ENCODE measurements at regions of chr2 and their contacts with region 1.

Region 1: GRCh38 chr2:236180831-236181453 is 12.8 kb upstream of the GBX2 start:
- DNase-seq: peak; percentile 49
- ATAC-seq: no peak
- H3K4me3 Mint-ChIP-seq: no peak overlapping the region
- H3K27ac Mint-ChIP-seq: no peak overlapping the region
- H3K4me1 Mint-ChIP-seq: no peaks in the 10 kb centered on the region
- H3K27me3 Mint-ChIP-seq: peaks cover 46% of the 10 kb centered on the region

Region 2: GRCh38 chr2:235779444-235779896 is 401.5 kb before region 1 on chr2:
- CTCF ChIA-PET with region 1: interaction called, 41 read pairs
- DNase-seq: peak; percentile 71
- ATAC-seq: peak; percentile 68
- H3K4me3 Mint-ChIP-seq: no peak overlapping the region
- H3K27ac Mint-ChIP-seq: no peak overlapping the region
- H3K4me1 Mint-ChIP-seq: no peaks in the 10 kb centered on the region
- H3K27me3 Mint-ChIP-seq: peaks cover 16% of the 10 kb centered on the region

Region 3: DNA sequence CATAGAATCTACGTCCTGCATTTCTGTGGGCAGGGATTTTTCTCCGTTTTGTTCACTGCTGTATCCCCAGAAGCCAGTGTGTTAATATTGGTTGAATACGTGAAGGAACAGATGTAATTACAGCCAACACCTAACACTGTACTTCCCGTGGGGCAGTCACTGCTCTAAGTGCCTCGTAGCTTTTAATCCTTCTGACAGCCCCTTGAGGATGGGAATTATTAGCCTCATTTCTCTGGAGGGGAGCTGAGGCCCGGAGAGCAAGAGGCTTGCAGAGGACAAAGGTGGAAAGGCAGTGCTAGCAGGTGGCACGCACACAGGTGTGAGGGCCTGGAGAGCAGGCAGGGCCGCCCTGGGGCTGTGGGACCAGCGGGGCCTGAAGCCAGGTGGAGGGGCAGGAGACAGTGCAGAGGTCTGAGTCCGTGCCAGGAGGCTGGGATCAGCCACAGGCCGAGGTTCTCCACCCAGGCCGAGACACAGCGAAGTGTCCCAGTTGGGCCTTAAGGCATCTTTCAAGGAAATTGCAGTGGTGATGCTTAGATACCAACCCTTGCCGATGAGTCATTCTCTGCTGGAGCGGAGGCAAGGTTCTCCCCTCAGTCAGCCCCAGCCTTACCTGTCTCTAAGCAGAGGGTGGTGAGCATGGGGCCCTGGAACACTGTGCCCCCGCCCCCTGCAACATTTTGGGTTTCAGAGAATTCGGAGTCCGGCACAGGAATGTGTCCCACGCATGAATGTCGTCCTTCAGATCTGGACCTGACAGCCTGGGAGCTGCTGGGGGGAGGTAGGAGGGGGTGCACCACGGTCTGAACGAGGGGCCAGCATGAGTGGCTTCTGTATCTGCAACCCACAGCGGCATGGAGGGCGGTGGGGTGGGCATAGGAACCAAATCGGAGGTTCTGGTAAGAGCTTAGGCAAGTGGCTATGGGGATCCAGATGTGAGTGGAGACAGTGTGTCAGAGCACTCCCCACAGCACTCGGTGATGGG is 135.4 kb before region 1 on chr2:
- CTCF ChIA-PET with region 1: no interaction called
- DNase-seq: no peak
- ATAC-seq: no peak
- H3K4me3 Mint-ChIP-seq: no peak overlapping the region
- H3K27ac Mint-ChIP-seq: no peak overlapping the region
- H3K4me1 Mint-ChIP-seq: peaks cover 8% of the 10 kb centered on the region
- H3K27me3 Mint-ChIP-seq: peaks cover 5% of the 10 kb centered on the region

Region 4: DNA sequence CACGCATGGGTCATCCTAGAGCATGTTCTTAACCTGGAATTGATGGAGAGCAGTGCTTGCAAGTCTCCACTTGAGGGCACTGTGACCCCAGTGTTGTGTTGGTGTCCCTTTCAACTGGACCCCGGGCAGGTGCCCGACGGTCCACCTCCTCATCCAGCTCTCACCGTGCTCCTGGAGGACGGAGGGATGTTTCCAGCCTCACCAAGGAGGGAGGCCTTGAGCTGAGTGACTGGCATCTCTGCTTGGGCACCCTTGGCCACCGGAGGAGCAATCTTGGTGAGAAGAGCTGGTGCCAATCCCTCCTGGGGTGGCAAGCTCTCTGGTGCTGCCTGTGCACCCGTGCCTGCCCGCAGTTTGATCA is 128.7 kb after region 1 on chr2:
- CTCF ChIA-PET with region 1: no interaction called
- DNase-seq: no peak
- ATAC-seq: no peak
- H3K4me3 Mint-ChIP-seq: no peak overlapping the region
- H3K27ac Mint-ChIP-seq: no peak overlapping the region
- H3K4me1 Mint-ChIP-seq: no peaks in the 10 kb centered on the region
- H3K27me3 Mint-ChIP-seq: peaks cover 14% of the 10 kb centered on the region

Measured in activated CD8-positive, alpha-beta memory T cell treated with anti-CD3 and anti-CD28 coated beads, Interleukin-2, amount 10 ng/mL, durations not matched to agents 7 days and 5 days (primary cell).